ENCODE measurements at regions of chr12 and their contacts with region 1.

Region 1: DNA sequence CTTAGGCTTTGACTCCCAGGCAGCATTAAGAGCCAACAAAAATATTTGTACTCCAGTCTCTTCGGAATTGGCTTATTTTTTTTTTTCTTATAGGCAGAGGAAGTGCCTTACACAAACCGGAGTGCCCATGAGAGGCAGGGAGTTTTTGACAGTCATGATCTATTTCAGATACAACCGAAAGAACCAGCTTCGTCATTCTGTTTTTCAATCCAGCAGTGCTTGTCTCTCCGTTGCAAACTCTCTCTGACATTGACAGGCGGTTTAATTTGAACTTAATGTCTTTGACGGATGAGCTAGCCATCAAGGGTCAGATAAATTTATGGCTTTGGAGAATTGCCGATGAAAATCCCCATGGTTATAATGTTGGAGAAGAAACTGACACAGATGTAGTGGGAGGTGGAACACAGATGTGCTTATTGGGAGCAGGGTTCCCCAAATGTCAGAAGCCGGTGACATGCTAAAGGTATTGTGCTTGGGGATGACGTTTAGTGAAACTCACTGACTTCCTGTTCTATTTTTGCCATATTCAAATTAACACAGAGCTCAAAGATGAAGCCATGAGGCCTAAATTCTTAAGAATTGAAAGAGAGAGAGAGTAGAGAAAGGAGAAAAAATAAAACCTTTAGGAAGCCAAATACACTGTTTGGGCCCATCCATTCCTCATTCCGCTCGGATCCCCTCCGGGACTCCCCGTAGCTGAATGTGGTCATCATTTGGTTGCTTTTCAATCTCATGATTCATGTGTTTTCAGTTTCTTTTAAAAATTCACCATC is 59.7 kb downstream of the PLXNC1 start:
- DNase-seq: peak in 2 of 5 donors; percentile 18 to 37
- H3K4me3 ChIP-seq: no peak overlapping the region
- H3K27ac ChIP-seq: peak overlapping the region; percentile 49 to 73
- H3K4me1 ChIP-seq: peaks cover 20% of the 10 kb centered on the region
- H3K27me3 ChIP-seq: no peaks in the 10 kb centered on the region
- CTCF ChIP-seq: no peak
- EP300 ChIP-seq: no peak
- POLR2A ChIP-seq: no peak

Region 2: DNA sequence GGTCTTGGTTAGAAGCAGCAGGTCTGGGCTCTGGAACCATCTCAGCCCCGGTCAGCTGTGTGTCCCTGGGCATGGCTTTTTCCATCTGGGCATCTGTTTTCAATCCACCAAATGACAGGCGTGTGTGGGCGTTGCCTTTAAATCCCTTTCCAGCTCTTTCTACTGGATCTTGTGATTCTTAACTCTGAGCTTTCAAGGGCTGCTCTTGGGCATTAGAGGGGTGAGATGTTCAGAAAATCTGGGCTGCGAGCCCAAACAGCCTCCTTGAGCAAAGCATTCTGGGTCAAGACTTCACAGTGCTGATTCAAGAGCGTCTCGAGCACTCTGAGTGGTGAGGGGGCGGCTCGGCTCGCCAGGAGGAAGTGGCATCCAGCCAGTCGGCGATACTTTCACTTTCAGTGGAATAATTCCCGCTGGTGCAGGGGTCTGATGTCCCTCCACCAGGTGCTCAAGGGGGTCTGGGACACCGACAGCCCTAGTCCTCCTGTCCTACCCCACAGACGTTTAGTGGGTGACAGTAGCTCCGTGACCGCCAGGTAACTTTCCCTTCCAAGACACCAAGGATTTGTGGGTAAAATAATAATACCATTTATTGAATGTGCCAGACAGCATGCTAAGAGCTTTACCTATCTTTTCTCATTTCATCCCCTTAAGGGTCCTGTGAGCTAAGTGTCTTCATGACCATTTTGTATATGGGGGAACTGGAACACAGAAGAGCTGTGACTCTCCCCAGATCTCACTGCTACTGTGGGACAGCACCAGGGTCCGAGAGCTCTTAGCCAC is 54.4 kb after region 1 on chr12:
- intact Hi-C with region 1: loop called in 1 of 4 experiments (anchors 10 kb)
- DNase-seq: peak; percentile 93 to 97 (median 96)
- H3K4me3 ChIP-seq: peak overlapping the region; percentile 56
- H3K27ac ChIP-seq: peak overlapping the region; percentile 82 to 84
- H3K4me1 ChIP-seq: peaks cover 10% of the 10 kb centered on the region
- H3K27me3 ChIP-seq: no peaks in the 10 kb centered on the region
- CTCF ChIP-seq: no peak
- EP300 ChIP-seq: no peak
- POLR2A ChIP-seq: peak; percentile 41

Region 3: DNA sequence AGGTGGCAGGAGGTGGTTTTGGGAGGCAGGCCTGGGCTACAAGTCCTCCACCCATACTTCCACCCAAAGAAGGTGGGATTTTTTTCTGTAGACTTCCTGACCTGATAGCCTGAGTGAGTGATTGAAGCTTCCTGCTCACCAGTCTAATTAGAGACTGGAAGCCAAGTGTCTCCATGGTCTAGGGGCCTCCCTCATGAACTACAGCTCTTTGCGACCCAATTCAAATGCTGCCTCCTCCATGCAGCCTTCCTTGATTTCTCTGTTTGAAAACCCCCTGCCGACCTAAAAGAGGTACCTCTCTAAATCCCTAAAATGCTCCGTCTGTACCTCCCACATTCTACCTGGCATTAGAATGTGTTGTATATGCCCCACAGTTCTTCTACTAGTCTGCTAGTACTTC is 65.2 kb after region 1 on chr12:
- intact Hi-C with region 1: no loop called
- DNase-seq: no peak
- H3K4me3 ChIP-seq: no peak overlapping the region
- H3K27ac ChIP-seq: no peak overlapping the region
- H3K4me1 ChIP-seq: peaks cover 7% of the 10 kb centered on the region
- H3K27me3 ChIP-seq: no peaks in the 10 kb centered on the region
- CTCF ChIP-seq: no peak
- EP300 ChIP-seq: no peak
- POLR2A ChIP-seq: no peak

Measured in ovary (tissue), 10 donors.